HCT116 (cell line): ENCODE measurements at regions of chr1 and their contacts with region 1.

Region 1: DNA sequence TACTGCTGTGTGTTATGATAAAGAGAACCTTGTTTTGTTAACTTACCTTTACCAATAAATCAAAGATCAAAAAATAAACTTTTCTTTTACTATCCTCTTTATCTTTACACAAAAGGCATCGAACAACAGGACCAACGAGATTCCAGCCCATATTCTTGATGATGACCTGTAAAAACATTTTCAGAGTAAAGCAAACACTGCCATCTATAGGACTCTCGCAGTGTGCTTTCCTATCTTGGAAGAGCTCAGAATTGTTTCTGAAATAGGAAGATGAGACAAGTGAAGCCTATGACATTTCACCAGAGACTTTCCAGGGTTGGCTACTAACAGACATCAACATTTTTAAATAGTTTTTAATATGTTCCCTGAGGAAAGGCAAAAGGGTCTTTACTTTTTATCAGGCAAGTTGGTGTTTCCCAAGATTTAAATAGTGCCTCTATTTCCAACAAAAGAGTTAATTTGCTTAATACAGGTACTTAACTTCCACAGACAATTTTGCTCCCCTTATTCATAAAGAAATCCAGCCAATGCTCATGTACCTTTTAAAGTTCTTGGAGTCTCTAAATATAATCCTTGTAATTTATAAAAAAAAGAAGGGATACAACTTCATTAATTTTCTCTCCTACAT is 7.3 kb downstream of the GLMN start:
- DNase-seq: peak; percentile 52
- ATAC-seq: peak; percentile 70
- H3K4me3 ChIP-seq: no peak overlapping the region
- H3K27ac ChIP-seq: no peak overlapping the region
- H3K4me1 ChIP-seq: no peaks in the 10 kb centered on the region
- H3K27me3 ChIP-seq: no peaks in the 10 kb centered on the region
- CTCF ChIP-seq: peak; percentile 67 to 79 (median 69); a peak in 5 of 6 replicates
- POLR2A ChIP-seq: no peak
- RAD21 ChIP-seq: peak; percentile 85

Region 2: DNA sequence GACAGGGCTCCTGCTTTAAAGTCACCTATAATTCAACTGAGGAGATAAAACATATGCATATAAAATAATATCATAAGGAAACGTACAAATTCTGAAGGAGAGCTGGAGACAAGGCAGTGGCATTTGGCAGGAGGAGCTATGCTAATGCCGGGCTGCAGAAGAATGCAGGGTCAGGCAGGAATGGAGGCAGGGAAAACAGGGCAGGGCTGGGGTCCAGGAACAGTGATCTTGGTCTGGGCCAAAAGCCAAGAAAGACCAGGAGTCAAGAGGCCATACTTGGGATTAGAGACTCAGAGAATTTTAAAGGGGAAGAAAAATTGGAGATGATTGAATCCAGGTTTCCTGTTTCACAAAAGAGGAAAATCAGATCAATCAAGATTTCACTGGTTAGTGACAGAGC is 362.2 kb before region 1 on chr1:
- CTCF ChIA-PET with region 1: interaction called, 9 read pairs
- POLR2A ChIA-PET with region 1: no interaction called
- RAD21 ChIA-PET with region 1: no interaction called
- intact Hi-C with region 1: loop called (anchors 5 kb)
- DNase-seq: no peak
- ATAC-seq: no peak
- H3K4me3 ChIP-seq: no peak overlapping the region
- H3K27ac ChIP-seq: no peak overlapping the region
- H3K4me1 ChIP-seq: peaks cover 2 to 4% of the 10 kb centered on the region in 2 experiments; a peak in 1 of 4 replicates
- H3K27me3 ChIP-seq: no peaks in the 10 kb centered on the region
- CTCF ChIP-seq: no peak
- POLR2A ChIP-seq: no peak
- RAD21 ChIP-seq: no peak

Region 3: GRCh38 chr1:92154934-92155333 is 136.6 kb before region 1 on chr1:
- CTCF ChIA-PET with region 1: no interaction called
- POLR2A ChIA-PET with region 1: no interaction called
- RAD21 ChIA-PET with region 1: no interaction called
- intact Hi-C with region 1: no loop called
- DNase-seq: no peak
- ATAC-seq: no peak
- H3K4me3 ChIP-seq: no peak overlapping the region
- H3K27ac ChIP-seq: no peak overlapping the region
- H3K4me1 ChIP-seq: no peaks in the 10 kb centered on the region
- H3K27me3 ChIP-seq: no peaks in the 10 kb centered on the region
- CTCF ChIP-seq: no peak
- POLR2A ChIP-seq: no peak
- RAD21 ChIP-seq: no peak

Region 4: GRCh38 chr1:93567255-93567918 is 1275.9 kb after region 1 on chr1:
- CTCF ChIA-PET with region 1: no interaction called
- POLR2A ChIA-PET with region 1: no interaction called
- RAD21 ChIA-PET with region 1: no interaction called
- intact Hi-C with region 1: no loop called
- DNase-seq: no peak
- ATAC-seq: peak; percentile 34; the same call in 1 of the 2 replicates
- H3K4me3 ChIP-seq: no peak overlapping the region
- H3K27ac ChIP-seq: no peak overlapping the region
- H3K4me1 ChIP-seq: no peaks in the 10 kb centered on the region
- H3K27me3 ChIP-seq: no peaks in the 10 kb centered on the region
- CTCF ChIP-seq: no peak
- POLR2A ChIP-seq: no peak
- RAD21 ChIP-seq: no peak